PC-3 (cell line): ENCODE measurements at regions of chr3 and their contacts with region 1.

Region 1: DNA sequence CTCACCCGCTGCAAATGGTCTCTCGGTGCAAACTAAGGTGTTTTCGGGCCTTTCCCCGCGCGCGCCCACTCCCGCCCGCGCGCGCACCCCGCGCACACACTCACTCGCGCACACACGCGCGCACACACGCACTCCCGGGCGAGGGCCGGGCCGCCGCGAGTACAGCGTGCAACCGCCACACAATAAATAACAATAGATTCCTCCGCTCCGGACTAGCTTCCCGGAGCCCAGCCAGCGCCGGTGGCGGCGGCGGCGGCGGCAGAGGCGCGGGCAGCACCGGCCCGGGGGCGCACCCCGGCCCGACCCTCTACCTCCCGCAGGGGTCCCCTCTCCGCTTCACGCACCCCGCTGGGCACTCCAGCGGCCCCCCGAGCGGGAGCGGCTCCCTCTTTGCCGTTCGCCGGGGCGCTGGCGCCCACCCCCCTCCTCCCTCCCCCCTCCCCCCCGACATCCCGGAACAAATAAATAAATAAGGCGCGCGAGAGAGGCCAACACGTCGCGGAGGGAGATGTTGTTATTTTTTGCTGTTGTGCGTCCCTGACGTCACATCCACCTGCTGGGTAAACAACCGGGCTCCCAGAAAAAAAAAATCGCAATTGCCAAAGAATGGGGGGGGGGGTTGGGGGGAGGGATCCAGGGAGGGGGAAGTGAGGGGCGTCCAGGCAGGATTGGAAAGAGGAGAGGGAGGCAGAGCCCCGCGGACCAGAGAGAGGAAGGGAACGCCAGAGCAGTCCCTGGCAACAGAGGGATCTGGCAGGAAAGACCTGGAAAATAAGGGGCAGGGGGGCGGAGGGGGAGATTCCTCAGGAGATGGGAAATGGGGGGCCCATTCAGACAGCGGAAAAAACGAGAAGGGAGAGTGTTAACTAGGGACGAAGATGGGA is at the start of gene FOXP1:
- DNase-seq: peak; percentile 74
- ATAC-seq: peak; percentile 35
- H3K4me3 ChIP-seq: peak within 1 kb of the TSS; percentile 91
- H3K27ac ChIP-seq: peak within 1 kb of the TSS; percentile 58
- H3K4me1 ChIP-seq: peaks cover 41% of the 10 kb centered on the region
- H3K27me3 ChIP-seq: no peaks in the 10 kb centered on the region
- CTCF ChIP-seq: no peak
- total RNA-seq, gene FOXP1: 35.3 and 36.0 TPM in 2 replicates

Region 2: GRCh38 chr3:71006810-71007785 is 576.7 kb before region 1 on chr3:
- CTCF ChIA-PET with region 1: no interaction called
- POLR2A ChIA-PET with region 1: no interaction called
- intact Hi-C with region 1: loop called (anchors 2 kb)
- DNase-seq: peak; percentile 69
- ATAC-seq: peak; percentile 60
- H3K4me3 ChIP-seq: no peak overlapping the region
- H3K27ac ChIP-seq: peak overlapping the region; percentile 35
- H3K4me1 ChIP-seq: peaks cover 23% of the 10 kb centered on the region
- H3K27me3 ChIP-seq: no peaks in the 10 kb centered on the region
- CTCF ChIP-seq: peak; percentile 82

Region 3: DNA sequence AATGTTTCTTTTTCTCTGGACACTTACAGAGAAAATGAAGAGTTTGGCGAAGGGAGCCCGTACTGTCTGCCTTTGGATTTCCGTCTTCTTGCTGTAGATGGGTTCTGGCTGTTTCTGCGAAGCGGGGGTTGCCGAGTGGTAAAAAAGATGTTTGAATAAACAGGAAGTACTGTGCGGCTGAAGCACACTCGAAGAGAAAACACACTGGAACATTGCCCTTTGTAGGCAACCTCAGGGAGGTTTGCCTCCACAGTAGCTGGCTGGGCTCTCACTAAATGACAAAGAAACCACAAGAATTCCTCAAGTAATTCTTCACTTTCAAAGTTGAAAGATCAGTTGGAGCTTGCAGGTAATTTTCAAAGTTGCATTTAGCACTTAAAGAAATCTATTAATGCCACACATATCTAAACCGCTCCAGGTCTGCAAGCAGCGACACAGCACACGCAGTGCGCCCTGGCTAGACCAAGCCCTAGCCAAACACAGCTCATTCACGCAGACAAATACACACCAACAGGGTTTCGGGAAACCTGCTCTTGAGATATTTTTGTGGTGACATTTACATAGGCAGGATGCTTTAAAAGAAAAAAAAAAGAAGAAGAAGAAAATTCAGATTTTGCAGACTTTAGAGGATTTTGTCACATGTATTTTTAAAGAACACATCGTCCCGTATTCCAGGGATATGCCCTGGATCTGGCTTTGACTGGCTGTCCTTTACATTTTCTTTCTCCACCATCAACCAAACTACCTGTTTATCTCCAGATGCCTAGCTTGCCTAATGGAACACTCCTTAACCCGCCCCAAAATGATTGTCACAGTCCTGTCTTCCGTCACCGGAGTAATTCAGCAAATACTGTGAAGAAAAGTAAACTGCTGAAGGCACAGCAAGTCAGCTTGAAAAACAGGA is 453.1 kb before region 1 on chr3:
- CTCF ChIA-PET with region 1: no interaction called
- POLR2A ChIA-PET with region 1: interaction called, 20 read pairs
- intact Hi-C with region 1: loop called (anchors 5 kb)
- DNase-seq: peak; percentile 76
- ATAC-seq: peak; percentile 79
- H3K4me3 ChIP-seq: peak overlapping the region; percentile 71
- H3K27ac ChIP-seq: peak overlapping the region; percentile 8
- H3K4me1 ChIP-seq: peaks cover 32% of the 10 kb centered on the region
- H3K27me3 ChIP-seq: no peaks in the 10 kb centered on the region
- CTCF ChIP-seq: no peak

Region 4: GRCh38 chr3:71305231-71306206 is 278.3 kb before region 1 on chr3:
- CTCF ChIA-PET with region 1: no interaction called
- POLR2A ChIA-PET with region 1: no interaction called
- intact Hi-C with region 1: loop called (anchors 1 kb)
- DNase-seq: peak; percentile 38
- ATAC-seq: peak; percentile 65
- H3K4me3 ChIP-seq: peak overlapping the region; percentile 57
- H3K27ac ChIP-seq: no peak overlapping the region
- H3K4me1 ChIP-seq: peaks cover 24% of the 10 kb centered on the region
- H3K27me3 ChIP-seq: no peaks in the 10 kb centered on the region
- CTCF ChIP-seq: no peak

Region 5: GRCh38 chr3:71466483-71466882 is 117.3 kb before region 1 on chr3:
- CTCF ChIA-PET with region 1: no interaction called
- POLR2A ChIA-PET with region 1: no interaction called
- intact Hi-C with region 1: loop called (anchors 1 kb)
- DNase-seq: peak; percentile 72
- ATAC-seq: peak; percentile 64
- H3K4me3 ChIP-seq: peak overlapping the region; percentile 33
- H3K27ac ChIP-seq: 0 out of 2 replicates have a peak overlapping the region, but pooled peaks have one; percentile 1
- H3K4me1 ChIP-seq: peaks cover 37% of the 10 kb centered on the region
- H3K27me3 ChIP-seq: no peaks in the 10 kb centered on the region
- CTCF ChIP-seq: no peak

Region 6: DNA sequence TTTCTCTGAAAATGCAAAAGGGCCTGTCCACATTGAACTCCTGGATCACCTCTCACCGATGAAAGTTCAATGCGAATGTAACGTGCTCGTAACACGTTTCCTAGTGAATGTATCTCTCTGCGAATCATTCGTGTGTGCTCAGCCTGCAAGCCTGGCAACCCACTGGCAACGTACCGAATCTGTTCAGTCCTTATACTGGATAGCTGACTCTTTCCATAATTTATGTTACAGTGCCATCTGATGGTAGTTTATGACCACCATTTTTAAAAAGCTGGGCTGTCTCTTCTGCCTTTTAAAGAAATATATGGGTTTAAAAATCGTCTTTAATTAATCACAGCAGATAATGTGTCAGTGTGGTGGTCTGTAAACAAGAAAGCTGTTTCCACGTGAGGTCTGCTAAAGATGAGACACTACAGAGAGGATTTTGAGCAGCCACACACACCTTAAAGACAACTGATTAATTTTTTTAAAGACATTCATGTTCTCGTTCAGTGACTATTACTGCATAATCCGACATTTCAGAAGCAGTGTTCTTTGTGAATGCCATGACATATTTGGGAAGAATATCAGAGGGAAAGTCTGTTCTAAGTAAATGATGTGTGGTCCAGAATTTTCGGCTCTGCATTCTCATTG is 69.1 kb after region 1 on chr3:
- CTCF ChIA-PET with region 1: interaction called, 4 read pairs
- POLR2A ChIA-PET with region 1: no interaction called
- intact Hi-C with region 1: loop called (anchors 2 kb)
- DNase-seq: peak; percentile 76
- ATAC-seq: peak; percentile 76
- H3K4me3 ChIP-seq: peak overlapping the region; percentile 31; the same call in 1 of the 2 replicates
- H3K27ac ChIP-seq: no peak overlapping the region
- H3K4me1 ChIP-seq: peaks cover 14% of the 10 kb centered on the region
- H3K27me3 ChIP-seq: no peaks in the 10 kb centered on the region
- CTCF ChIP-seq: peak; percentile 90